Activated CD4-positive, alpha-beta memory T cell treated with anti-CD3 and anti-CD28 coated beads for 36 hours (primary cell): ENCODE measurements at regions of chr1 and their contacts with region 1.

Region 1: DNA sequence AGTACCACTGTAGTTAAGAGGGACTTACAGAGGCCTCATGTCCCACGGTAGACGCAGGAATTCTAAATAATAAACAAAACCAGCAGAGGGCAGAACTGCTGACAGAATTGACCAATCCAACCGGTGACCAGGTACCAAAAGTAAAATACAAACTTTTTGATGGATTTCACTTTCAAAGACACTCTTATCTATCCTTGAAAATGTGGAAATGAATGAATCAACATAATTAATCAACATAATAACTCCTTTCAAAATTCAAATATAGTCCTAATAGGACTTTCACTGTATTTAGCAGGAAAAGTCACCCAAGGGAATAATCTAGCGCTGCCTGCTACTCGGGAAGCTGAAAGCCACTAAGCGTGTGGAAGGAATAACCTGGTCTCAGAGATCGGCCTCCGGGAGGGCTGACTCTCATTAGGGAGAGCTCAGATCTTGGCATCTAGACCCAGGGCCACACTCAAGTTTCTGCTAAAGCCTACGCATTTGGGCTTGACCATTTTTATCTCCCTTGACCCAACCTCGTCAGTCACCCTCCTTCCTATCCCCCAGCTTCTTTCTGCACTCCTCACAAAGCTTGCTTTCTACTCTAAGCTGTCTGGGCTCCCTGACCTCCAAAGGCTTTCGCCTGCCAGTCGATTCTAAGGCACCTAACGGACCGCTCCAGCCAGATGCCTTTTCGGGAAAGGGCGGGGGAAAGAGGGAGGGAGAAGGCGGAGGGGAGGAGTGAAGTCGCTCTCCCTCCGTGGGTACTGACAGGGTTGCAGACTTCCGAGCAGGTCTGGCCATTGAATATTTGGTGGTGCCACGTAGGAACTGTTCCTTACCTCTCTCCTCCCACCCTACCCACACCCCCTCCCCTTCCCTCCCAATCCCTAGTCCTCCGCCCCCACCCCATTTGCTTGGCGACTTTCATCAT is 1.6 kb downstream of the COL11A1 start:
- DNase-seq: no peak
- H3K4me3 Mint-ChIP-seq: no peak overlapping the region
- H3K27ac Mint-ChIP-seq: no peak overlapping the region
- H3K4me1 Mint-ChIP-seq: peaks cover 14% of the 10 kb centered on the region
- H3K27me3 Mint-ChIP-seq: peaks cover 32% of the 10 kb centered on the region

Region 2: DNA sequence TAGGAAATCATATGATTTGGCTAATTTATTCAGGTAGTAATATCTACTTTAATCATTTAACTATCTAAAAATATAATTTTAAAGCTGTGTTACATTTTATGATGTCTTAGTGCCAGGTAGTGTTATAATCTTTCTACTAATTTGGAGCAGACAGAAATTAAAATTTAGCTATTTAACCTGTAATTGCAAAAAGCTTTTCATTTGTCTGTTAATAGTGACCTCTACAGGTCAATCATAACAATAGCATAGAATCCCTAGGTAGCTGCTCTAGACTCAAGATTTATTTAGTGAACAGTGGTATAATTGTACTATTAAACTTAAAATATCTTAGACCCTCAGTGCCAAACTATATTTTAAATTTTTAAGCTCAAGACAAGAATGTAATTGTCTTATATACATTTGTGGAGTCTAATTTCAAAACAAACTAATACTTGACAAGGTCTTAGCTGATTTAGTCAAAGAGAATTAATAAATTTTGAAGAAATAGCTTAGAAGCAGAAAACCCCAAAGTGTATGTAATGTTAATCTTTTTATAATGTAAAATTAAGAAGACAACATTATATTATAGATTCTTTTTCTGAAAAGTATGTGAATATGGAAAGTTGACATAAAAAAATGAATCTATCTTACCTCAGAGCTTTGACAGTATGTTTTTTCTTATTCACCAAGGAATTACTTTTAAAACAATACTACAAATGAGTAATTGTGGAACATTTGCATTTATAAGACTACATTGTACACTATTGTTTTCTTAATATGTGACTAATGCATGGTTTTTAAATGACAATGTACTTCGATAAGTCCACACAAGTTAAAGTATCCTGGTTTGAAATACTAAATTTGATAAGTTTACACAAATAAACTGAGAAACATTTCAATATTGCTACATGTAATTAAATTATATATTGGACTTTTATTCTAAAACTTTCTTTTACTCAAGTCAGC is 354.7 kb after region 1 on chr1:
- CTCF ChIA-PET with region 1: interaction called, 16 read pairs
- POLR2A ChIA-PET with region 1: no interaction called
- intact Hi-C with region 1: loop called (anchors 2 kb)
- DNase-seq: no peak
- H3K4me3 Mint-ChIP-seq: no peak overlapping the region
- H3K27ac Mint-ChIP-seq: no peak overlapping the region
- H3K4me1 Mint-ChIP-seq: no peaks in the 10 kb centered on the region
- H3K27me3 Mint-ChIP-seq: peaks cover 2% of the 10 kb centered on the region